SK-N-SH (cell line): ENCODE measurements at regions of chr15 and their contacts with region 1.

Region 1: GRCh38 chr15:72722071-72722696 is 36.2 kb downstream of the BBS4 start:
- DNase-seq: peak; percentile 54
- H3K4me3 ChIP-seq: no peak overlapping the region; a peak in 1 of 4 replicates
- H3K27ac ChIP-seq: no peak overlapping the region
- H3K4me1 ChIP-seq: no peaks in the 10 kb centered on the region
- H3K27me3 ChIP-seq: no peaks in the 10 kb centered on the region
- CTCF ChIP-seq: peak; percentile 93
- EP300 ChIP-seq: no peak
- RAD21 ChIP-seq: peak; percentile 74

Region 2: DNA sequence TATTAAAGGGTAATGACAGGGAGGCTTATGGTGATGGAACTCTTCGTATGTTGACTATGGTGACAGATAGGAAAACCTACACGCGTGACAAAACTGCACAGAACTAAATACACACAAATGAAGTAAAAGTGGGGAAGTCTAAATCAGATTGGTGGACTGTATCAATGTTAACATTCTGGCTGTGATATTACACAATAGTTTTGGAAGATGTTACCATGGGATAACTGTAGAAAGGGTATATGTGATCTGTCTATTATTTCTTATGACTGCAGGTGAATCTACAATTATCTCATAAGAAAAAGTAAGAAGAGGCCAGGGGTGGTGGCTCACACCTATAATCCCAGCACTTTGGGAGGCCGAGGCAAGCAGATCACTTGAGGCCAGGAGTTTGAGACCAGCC is 45.3 kb before region 1 on chr15:
- CTCF ChIA-PET with region 1: no interaction called
- POLR2A ChIA-PET with region 1: no interaction called
- DNase-seq: no peak
- H3K4me3 ChIP-seq: no peak overlapping the region
- H3K27ac ChIP-seq: no peak overlapping the region
- H3K4me1 ChIP-seq: no peaks in the 10 kb centered on the region
- H3K27me3 ChIP-seq: peaks cover 33% of the 10 kb centered on the region; the same call in 1 of the 2 replicates
- CTCF ChIP-seq: no peak
- EP300 ChIP-seq: no peak
- RAD21 ChIP-seq: no peak

Region 3: GRCh38 chr15:72700076-72700475 is 22.1 kb before region 1 on chr15:
- CTCF ChIA-PET with region 1: interaction called, 16 read pairs
- POLR2A ChIA-PET with region 1: no interaction called
- DNase-seq: no peak
- H3K4me3 ChIP-seq: no peak overlapping the region
- H3K27ac ChIP-seq: no peak overlapping the region
- H3K4me1 ChIP-seq: no peaks in the 10 kb centered on the region
- H3K27me3 ChIP-seq: no peaks in the 10 kb centered on the region
- CTCF ChIP-seq: no peak
- EP300 ChIP-seq: no peak
- RAD21 ChIP-seq: no peak

Region 4: GRCh38 chr15:72732516-72732915 is 10.3 kb after region 1 on chr15:
- CTCF ChIA-PET with region 1: interaction called, 72 read pairs
- POLR2A ChIA-PET with region 1: no interaction called
- DNase-seq: no peak
- H3K4me3 ChIP-seq: no peak overlapping the region
- H3K27ac ChIP-seq: no peak overlapping the region
- H3K4me1 ChIP-seq: no peaks in the 10 kb centered on the region
- H3K27me3 ChIP-seq: no peaks in the 10 kb centered on the region
- CTCF ChIP-seq: peak; percentile 6; the same call in 1 of the 2 replicates
- EP300 ChIP-seq: no peak
- RAD21 ChIP-seq: no peak

Region 5: GRCh38 chr15:72751751-72752455 is 29.7 kb after region 1 on chr15:
- CTCF ChIA-PET with region 1: interaction called, 16 read pairs
- POLR2A ChIA-PET with region 1: no interaction called
- DNase-seq: no peak
- H3K4me3 ChIP-seq: no peak overlapping the region
- H3K27ac ChIP-seq: no peak overlapping the region
- H3K4me1 ChIP-seq: peaks cover 0 to 3% of the 10 kb centered on the region in 2 experiments; a peak in 2 of 4 replicates
- H3K27me3 ChIP-seq: no peaks in the 10 kb centered on the region
- CTCF ChIP-seq: no peak
- EP300 ChIP-seq: no peak
- RAD21 ChIP-seq: no peak

Region 6: GRCh38 chr15:73081321-73081958 is 359.3 kb after region 1 on chr15:
- CTCF ChIA-PET with region 1: interaction called, 11 read pairs
- POLR2A ChIA-PET with region 1: no interaction called
- DNase-seq: peak; percentile 17
- H3K4me3 ChIP-seq: no peak overlapping the region
- H3K27ac ChIP-seq: no peak overlapping the region
- H3K4me1 ChIP-seq: peaks cover 0 to 14% of the 10 kb centered on the region in 2 experiments; a peak in 2 of 4 replicates
- H3K27me3 ChIP-seq: no peaks in the 10 kb centered on the region
- CTCF ChIP-seq: peak; percentile 85
- EP300 ChIP-seq: no peak
- RAD21 ChIP-seq: peak; percentile 82